SK-N-SH (cell line): ENCODE measurements at regions of chr5 and their contacts with region 1.

Region 1: DNA sequence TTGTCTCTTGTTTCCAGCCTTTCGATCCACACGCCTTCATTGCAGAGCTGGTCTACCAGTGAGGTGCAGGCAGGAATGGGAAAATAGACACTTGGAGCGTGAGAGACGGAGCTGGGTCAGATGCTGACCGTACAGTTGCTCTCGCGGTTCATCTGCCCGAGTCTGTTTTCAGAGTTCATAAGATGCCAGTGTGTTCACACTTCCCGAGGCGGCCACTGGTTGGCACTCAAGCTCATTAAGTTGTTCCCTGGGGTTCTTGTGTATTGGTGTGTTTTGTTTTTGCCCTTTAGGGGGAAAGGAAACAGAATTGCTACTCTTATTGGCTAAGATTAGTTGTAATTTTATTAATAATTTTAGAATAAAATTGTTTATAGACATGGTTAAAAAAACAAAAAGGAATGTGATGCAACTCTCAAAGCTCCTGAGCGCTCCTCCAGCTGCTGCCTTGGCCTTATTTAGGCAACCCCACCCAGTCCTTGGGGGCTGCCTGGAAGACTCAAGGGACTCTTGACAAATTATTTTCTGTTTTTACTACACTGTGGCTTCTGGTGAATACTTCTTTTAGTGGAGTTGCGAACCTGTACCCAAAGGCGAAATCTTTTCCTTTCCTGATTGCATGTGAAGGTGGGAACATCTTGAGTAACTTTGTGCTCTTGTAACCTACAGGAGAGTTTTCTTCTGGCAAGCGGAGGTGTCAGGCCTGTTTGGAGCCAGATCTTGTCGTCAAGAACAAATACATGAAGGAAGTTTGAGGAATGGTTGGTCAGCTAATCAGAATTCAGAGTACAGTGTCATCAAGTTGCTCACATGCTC is 146.1 kb downstream of the MAST4 start:
- DNase-seq: peak; percentile 39
- H3K4me3 ChIP-seq: no peak overlapping the region
- H3K27ac ChIP-seq: no peak overlapping the region
- H3K4me1 ChIP-seq: no peaks in the 10 kb centered on the region
- H3K27me3 ChIP-seq: no peaks in the 10 kb centered on the region
- CTCF ChIP-seq: peak; percentile 21; the same call in 1 of the 2 replicates
- EP300 ChIP-seq: no peak
- RAD21 ChIP-seq: peak; percentile 40

Region 2: GRCh38 chr5:66724349-66725139 is 17.7 kb before region 1 on chr5:
- CTCF ChIA-PET with region 1: interaction called, 17 read pairs
- POLR2A ChIA-PET with region 1: no interaction called
- DNase-seq: no peak
- H3K4me3 ChIP-seq: no peak overlapping the region
- H3K27ac ChIP-seq: no peak overlapping the region
- H3K4me1 ChIP-seq: no peaks in the 10 kb centered on the region
- H3K27me3 ChIP-seq: no peaks in the 10 kb centered on the region
- CTCF ChIP-seq: peak; percentile 35
- EP300 ChIP-seq: no peak
- RAD21 ChIP-seq: no peak